AG04449 (cell line): ENCODE measurements at regions of chr21 and their contacts with region 1.

Region 1: GRCh38 chr21:36989699-36990507 is 16.6 kb upstream of the RIPPLY3 start:
- DNase-seq: no peak
- H3K4me3 ChIP-seq: peak overlapping the region; percentile 64
- CTCF ChIP-seq: peak; percentile 82

Region 2: GRCh38 chr21:36718951-36719501 is 270.9 kb before region 1 on chr21:
- CTCF ChIA-PET with region 1: no interaction called
- POLR2A ChIA-PET with region 1: no interaction called
- DNase-seq: no peak
- H3K4me3 ChIP-seq: no peak overlapping the region
- CTCF ChIP-seq: no peak

Region 3: GRCh38 chr21:36976882-36977651 is 12.8 kb before region 1 on chr21:
- CTCF ChIA-PET with region 1: interaction called, 35 read pairs
- POLR2A ChIA-PET with region 1: interaction called, 3 read pairs
- DNase-seq: no peak
- H3K4me3 ChIP-seq: no peak overlapping the region
- CTCF ChIP-seq: peak; percentile 49

Region 4: GRCh38 chr21:37000381-37000780 is 10.5 kb after region 1 on chr21:
- CTCF ChIA-PET with region 1: interaction called, 21 read pairs
- POLR2A ChIA-PET with region 1: interaction called, 4 read pairs
- DNase-seq: no peak
- H3K4me3 ChIP-seq: no peak overlapping the region
- CTCF ChIP-seq: no peak

Region 5: DNA sequence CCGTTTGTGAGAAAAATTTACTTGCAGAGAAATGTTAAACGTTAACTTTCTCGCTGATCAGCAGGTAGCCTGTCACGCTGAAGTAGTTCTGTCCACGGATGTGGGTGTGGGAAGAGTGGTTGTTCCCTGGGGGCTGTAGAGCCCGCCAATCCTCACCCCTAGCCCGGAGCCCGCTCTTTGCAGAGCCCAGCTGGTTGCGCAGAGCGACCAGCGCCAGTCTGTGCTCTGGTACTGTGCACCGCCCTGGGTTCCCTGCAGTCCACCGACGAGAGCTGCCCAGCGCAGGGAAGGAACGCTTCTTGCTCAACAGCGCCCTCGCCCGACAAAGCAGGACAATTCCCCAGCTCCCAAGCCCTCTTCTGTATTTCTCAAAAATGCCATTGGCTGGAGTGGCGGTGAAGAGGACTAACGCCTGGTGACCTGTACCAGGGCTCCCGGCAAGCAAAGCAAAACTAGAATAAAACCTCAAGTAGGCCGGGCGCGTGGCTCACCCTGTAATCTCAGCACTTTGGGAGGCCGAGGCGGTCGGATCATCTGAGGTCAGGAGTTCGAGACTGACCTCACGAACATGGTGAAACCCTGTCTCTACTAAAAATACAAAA is 19.9 kb after region 1 on chr21:
- CTCF ChIA-PET with region 1: interaction called, 49 read pairs
- POLR2A ChIA-PET with region 1: interaction called, 4 read pairs
- DNase-seq: no peak
- H3K4me3 ChIP-seq: peak overlapping the region; percentile 29
- CTCF ChIP-seq: peak; percentile 95

Region 6: DNA sequence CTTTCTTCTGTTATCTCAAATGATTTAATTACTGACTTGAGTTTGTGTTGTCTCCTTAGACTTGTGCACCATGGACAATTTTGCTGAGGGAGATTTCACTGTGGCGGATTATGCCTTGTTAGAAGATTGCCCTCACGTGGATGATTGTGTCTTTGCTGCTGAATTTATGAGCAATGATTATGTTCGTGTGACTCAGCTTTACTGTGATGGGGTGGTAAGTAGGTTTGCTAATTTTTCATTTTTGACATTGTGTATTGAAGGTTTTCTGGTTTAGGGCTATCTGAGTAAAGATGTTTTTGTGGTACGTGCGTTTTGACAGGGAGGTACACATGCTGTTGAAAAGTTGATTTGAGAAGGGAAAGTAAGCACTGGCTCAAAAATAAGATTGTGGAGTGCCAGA is 97.3 kb after region 1 on chr21:
- CTCF ChIA-PET with region 1: interaction called, 19 read pairs
- POLR2A ChIA-PET with region 1: no interaction called
- DNase-seq: no peak
- H3K4me3 ChIP-seq: no peak overlapping the region
- CTCF ChIP-seq: peak; percentile 36